Calu3 (cell line): ENCODE measurements at regions of chr18 and their contacts with region 1.

Region 1: GRCh38 chr18:78247615-78248289 is 731.9 kb upstream of the SALL3 start:
- DNase-seq: no peak
- H3K4me3 Mint-ChIP-seq: no peak overlapping the region
- H3K27ac Mint-ChIP-seq: no peak overlapping the region
- H3K4me1 Mint-ChIP-seq: no peaks in the 10 kb centered on the region
- H3K27me3 Mint-ChIP-seq: no peaks in the 10 kb centered on the region
- CTCF ChIP-seq: no peak

Region 2: DNA sequence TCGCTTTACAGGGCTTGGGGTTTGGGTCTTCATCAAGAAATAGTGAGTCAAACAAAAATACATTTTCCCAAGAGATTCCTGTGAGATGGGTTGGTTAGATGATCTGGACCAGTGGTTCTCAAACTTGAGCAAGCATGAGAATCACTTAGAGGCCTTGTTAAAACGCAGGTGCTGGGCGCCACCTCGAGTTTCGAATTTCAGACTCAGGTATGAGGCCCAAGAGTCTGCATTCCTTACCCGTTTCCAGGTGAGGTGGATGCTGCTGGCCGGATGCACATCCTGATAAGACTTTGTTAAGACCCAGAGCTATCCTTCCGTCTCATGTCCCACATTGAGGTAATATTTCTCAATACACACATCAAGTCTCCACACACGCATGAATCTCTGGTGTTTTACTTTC is 24.0 kb after region 1 on chr18:
- CTCF ChIA-PET with region 1: no interaction called
- intact Hi-C with region 1: loop called (anchors 2 kb)
- DNase-seq: no peak
- H3K4me3 Mint-ChIP-seq: no peak overlapping the region
- H3K27ac Mint-ChIP-seq: no peak overlapping the region
- H3K4me1 Mint-ChIP-seq: no peaks in the 10 kb centered on the region
- H3K27me3 Mint-ChIP-seq: no peaks in the 10 kb centered on the region
- CTCF ChIP-seq: no peak

Region 3: DNA sequence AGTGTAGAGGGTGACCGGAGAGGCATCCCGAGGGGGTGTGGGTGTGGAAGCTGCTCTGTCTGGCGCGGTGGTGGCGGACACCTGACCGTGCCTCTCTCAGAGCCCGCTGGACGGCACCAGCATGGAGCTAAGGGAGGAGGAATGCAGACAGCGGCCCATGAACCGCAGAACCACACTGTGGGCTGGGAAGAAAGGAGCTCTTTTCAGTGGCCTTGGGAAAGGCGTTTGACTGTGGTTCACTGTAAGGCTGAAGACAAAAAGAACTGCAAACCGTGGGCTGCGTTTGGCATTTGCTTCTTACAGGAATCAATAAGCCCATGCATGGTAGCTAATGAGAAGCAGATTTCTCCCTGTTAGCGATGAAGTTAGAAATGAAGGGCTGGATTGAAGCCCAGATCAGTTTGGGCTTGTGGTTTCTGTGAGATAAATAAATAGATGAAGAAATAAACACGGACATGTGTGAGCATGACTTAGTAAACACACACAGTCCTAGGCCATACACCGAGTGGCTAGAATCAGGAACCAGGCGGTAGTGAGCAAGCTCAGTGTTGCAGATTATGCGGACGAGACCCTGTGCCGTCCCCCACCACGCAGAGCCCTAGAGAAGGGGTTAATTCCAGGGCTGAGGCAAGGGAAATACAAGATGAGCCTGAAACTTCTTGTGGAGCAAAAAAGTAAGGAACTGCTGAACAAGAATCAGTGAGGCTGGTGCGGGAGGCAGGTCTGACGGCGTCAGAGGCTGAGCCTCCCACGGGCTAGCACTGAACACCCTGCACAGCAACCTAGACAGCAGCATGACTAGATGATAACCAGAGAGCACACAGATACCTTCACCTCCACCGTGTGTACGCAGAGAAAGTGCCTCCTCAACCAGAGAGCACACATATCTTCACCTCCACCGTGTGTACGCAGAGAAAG is 1118.7 kb after region 1 on chr18:
- CTCF ChIA-PET with region 1: no interaction called
- intact Hi-C with region 1: no loop called
- DNase-seq: no peak
- H3K4me3 Mint-ChIP-seq: no peak overlapping the region
- H3K27ac Mint-ChIP-seq: no peak overlapping the region
- H3K4me1 Mint-ChIP-seq: no peaks in the 10 kb centered on the region
- H3K27me3 Mint-ChIP-seq: no peaks in the 10 kb centered on the region
- CTCF ChIP-seq: no peak